Naive thymus-derived CD4-positive, alpha-beta T cell (primary cell): ENCODE measurements at regions of chr5 and their contacts with region 1.

Region 1: GRCh38 chr5:110738812-110739651 is at the start of gene SLC25A46:
- DNase-seq: peak; percentile 75 to 92 (median 91)
- ATAC-seq: peak; percentile 92
- H3K4me3 ChIP-seq: peak within 1 kb of the TSS; percentile 96
- H3K4me3 Mint-ChIP-seq: peak within 1 kb of the TSS; percentile 90 to 100 (median 96)
- H3K27ac ChIP-seq: peak within 1 kb of the TSS; percentile 86
- H3K27ac Mint-ChIP-seq: peak within 1 kb of the TSS; percentile 91 to 100 (median 96)
- H3K4me1 ChIP-seq: peaks cover 4 to 15% of the 10 kb centered on the region in 2 donors
- H3K4me1 Mint-ChIP-seq: peaks cover 14 to 45% (median 34%) of the 10 kb centered on the region in 7 donors
- H3K27me3 ChIP-seq: no peaks in the 10 kb centered on the region
- H3K27me3 Mint-ChIP-seq: peaks cover 4 to 19% (median 6%) of the 10 kb centered on the region in 5 donors
- total RNA-seq, gene SLC25A46: 23.8 to 50.5 (median 35.9) TPM

Region 2: DNA sequence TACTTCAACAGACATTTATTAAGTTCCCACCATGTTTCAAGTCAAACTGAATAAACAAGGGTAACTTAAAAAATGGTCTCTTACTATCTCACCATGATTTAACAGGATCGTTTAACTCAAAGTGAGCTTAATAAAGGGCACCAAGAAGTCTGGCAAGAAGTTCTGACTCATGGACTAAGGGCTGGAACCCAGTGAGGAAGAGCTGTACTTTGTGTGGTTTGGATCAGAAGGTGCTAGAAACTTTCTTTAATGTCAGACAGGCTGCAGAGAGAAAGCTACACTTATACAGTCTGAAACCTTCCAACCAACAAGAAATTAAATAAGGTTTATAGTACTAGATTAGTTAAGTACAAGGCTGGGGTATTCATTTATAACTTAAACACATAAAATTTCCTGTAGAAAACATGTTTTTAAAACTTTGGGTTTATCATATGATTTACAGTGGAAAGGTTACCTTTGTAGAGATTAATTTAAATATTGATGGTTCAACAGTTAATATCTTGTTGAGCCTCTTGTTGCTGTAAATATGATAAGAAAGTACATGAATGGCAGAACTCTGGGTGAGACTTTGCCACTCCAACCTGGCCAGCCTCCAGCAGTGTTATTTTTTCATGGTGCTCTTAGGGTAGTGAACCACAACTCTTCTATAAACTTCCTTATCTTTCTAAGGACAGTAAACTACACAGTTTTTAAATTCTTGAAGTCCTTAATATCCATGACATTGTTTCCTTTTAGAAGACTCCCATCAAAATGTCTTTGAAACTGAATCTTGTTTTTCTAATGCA is 886.5 kb before region 1 on chr5:
- CTCF ChIA-PET with region 1: no interaction called
- POLR2A ChIA-PET with region 1: no interaction called
- intact Hi-C with region 1: loop called in 1 of 2 experiments (anchors 10 kb)
- DNase-seq: no peak
- ATAC-seq: no peak
- H3K4me3 ChIP-seq: no peak overlapping the region
- H3K4me3 Mint-ChIP-seq: peak overlapping the region in 8 of 10 donors; percentile 9 to 75 (median 23)
- H3K27ac ChIP-seq: no peak overlapping the region
- H3K27ac Mint-ChIP-seq: peak overlapping the region in 8 of 9 donors; percentile 63 to 97 (median 84)
- H3K4me1 ChIP-seq: peaks cover 61 to 71% of the 10 kb centered on the region in 2 donors
- H3K4me1 Mint-ChIP-seq: peaks cover 47 to 99% (median 91%) of the 10 kb centered on the region in 7 donors
- H3K27me3 ChIP-seq: no peaks in the 10 kb centered on the region
- H3K27me3 Mint-ChIP-seq: no peaks in the 10 kb centered on the region

Region 3: DNA sequence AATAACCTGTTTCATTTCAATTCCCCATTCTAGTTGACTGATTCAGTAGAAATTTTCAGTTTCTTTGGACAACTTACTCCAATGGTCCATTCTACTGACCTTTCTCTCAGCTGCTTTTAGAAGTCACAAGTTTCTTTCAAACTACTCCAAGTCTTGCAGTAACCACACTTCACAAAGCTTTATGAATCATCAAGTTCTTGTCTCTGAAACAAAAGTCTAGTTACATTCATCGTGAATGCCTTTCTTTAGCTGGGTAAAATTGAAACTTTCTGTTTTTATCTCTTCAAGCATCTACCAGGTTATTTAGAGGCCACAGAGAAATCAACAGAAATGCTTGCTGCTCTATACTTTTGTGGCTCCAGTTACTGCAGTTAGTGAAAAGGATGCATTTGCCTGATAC is 417.9 kb before region 1 on chr5:
- CTCF ChIA-PET with region 1: no interaction called
- POLR2A ChIA-PET with region 1: no interaction called
- intact Hi-C with region 1: no loop called
- DNase-seq: no peak
- ATAC-seq: no peak
- H3K4me3 ChIP-seq: no peak overlapping the region
- H3K4me3 Mint-ChIP-seq: no peak overlapping the region
- H3K27ac ChIP-seq: no peak overlapping the region
- H3K27ac Mint-ChIP-seq: no peak overlapping the region
- H3K4me1 ChIP-seq: no peaks in the 10 kb centered on the region
- H3K4me1 Mint-ChIP-seq: peaks cover 0 to 4% (median 0%) of the 10 kb centered on the region in 7 donors
- H3K27me3 ChIP-seq: no peaks in the 10 kb centered on the region
- H3K27me3 Mint-ChIP-seq: no peaks in the 10 kb centered on the region

Region 4: DNA sequence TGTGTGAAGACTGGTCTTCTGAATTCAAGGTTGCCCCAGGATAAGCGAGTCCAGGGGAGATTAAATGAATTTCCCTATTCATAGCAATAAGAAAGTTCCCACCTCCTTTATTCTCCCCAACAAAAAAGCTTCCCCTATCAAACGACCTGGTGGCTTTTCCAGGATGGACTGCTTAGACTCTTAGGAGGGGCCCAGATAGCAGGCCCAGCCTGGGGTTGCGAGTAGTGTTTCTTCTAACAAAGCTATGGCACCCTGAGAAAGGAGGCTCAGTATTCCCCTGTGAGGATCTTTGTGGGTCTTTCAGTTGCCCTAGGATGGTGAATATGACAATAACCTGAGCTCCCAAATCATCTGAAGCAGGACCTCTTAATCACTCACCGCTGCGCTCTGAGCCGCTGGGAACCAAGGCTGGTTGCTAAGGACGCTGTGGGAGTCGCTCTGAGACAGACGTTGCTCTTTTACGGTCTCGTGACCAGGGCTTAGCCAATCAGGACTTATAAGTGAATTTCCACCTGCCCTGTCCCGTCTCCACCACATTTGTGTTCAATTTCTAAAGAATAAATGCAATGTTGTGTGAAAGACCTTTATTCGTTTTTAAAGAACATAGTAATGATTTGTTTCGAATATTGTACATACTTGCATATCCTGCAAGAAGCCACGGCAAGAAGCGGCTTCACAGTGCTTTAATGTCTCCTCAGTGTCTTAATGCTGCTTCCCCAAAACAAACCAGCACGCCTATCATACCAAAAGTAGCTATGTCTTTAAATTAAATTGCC is 12.6 kb before region 1 on chr5 and contains the start of gene TMEM232:
- CTCF ChIA-PET with region 1: interaction called, 3 read pairs
- POLR2A ChIA-PET with region 1: interaction called, 7 read pairs
- intact Hi-C with region 1: loop called (anchors 1 kb)
- DNase-seq: peak; percentile 40 to 85 (median 65)
- ATAC-seq: peak; percentile 99
- H3K4me3 ChIP-seq: peak within 1 kb of the TSS; percentile 59
- H3K4me3 Mint-ChIP-seq: peak within 1 kb of the TSS; percentile 73 to 97 (median 86)
- H3K27ac ChIP-seq: peak within 1 kb of the TSS; percentile 37
- H3K27ac Mint-ChIP-seq: peak within 1 kb of the TSS in 7 of 9 donors; percentile 15 to 79 (median 65)
- H3K4me1 ChIP-seq: no peaks in the 10 kb centered on the region
- H3K4me1 Mint-ChIP-seq: peaks cover 0 to 8% (median 0%) of the 10 kb centered on the region in 7 donors
- H3K27me3 ChIP-seq: no peaks in the 10 kb centered on the region
- H3K27me3 Mint-ChIP-seq: peaks cover 0 to 3% (median 0%) of the 10 kb centered on the region in 5 donors
- total RNA-seq, gene TMEM232: 1.6 to 3.0 (median 2.9) TPM

Region 5: DNA sequence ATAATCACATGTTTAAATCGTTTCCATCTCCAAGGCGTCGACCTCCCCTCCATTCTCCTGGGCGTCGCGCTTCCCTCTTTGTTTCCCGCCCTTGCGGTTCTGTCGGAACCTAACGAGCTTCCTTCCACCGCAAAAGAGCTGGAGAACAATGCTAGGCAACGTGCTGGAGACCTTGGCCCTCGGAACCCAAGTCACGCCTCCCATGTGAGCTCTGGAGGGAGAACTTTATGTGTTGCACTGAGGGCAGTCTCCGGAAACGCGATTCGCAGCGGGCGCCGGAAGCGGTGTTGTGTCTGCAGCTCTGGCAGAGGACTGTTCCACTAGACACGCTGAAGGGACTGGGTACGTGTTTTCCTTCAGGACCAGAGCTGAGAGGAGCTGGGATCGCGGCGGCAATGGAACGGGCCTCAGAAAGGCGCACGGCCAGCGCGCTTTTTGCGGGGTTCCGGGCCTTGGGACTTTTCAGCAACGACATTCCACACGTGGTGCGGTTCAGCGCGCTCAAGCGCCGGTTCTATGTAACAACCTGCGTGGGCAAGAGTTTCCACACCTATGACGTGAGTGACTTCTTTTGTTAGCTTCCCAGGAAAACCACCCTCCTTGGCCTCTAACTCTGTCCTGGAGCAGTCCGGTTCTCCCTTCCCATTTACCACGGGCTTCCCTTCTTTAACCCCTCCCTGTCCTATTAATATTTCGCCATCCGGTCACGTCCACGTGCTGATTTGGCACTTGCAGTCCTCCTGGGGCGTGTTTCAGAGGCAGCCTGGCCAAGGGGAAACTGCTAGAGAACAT is 353.2 kb after region 1 on chr5 and contains the start of gene WDR36:
- CTCF ChIA-PET with region 1: no interaction called
- POLR2A ChIA-PET with region 1: interaction called, 4 read pairs
- intact Hi-C with region 1: loop called (anchors 1 kb)
- DNase-seq: peak; percentile 80 to 95 (median 87)
- ATAC-seq: peak; percentile 99
- H3K4me3 ChIP-seq: peak within 1 kb of the TSS; percentile 88
- H3K4me3 Mint-ChIP-seq: peak within 1 kb of the TSS; percentile 91 to 99 (median 98)
- H3K27ac ChIP-seq: peak within 1 kb of the TSS; percentile 82
- H3K27ac Mint-ChIP-seq: peak within 1 kb of the TSS; percentile 66 to 98 (median 94)
- H3K4me1 ChIP-seq: peaks cover 11 to 20% of the 10 kb centered on the region in 2 donors
- H3K4me1 Mint-ChIP-seq: peaks cover 22 to 49% (median 39%) of the 10 kb centered on the region in 7 donors
- H3K27me3 ChIP-seq: no peaks in the 10 kb centered on the region
- H3K27me3 Mint-ChIP-seq: peaks cover 0 to 12% (median 5%) of the 10 kb centered on the region in 5 donors
- total RNA-seq, gene WDR36: 24.8 to 37.4 (median 29.7) TPM

Region 6: GRCh38 chr5:111512375-111513130 is 773.5 kb after region 1 on chr5 and contains the start of gene STARD4:
- CTCF ChIA-PET with region 1: no interaction called
- POLR2A ChIA-PET with region 1: no interaction called
- intact Hi-C with region 1: loop called (anchors 5 kb)
- DNase-seq: peak; percentile 79 to 94 (median 92)
- ATAC-seq: peak; percentile 97
- H3K4me3 ChIP-seq: peak within 1 kb of the TSS; percentile 81
- H3K4me3 Mint-ChIP-seq: peak within 1 kb of the TSS; percentile 91 to 100 (median 98)
- H3K27ac ChIP-seq: peak within 1 kb of the TSS; percentile 73
- H3K27ac Mint-ChIP-seq: peak within 1 kb of the TSS; percentile 90 to 98 (median 94)
- H3K4me1 ChIP-seq: peaks cover 0 to 14% of the 10 kb centered on the region in 2 donors
- H3K4me1 Mint-ChIP-seq: peaks cover 17 to 53% (median 28%) of the 10 kb centered on the region in 7 donors
- H3K27me3 ChIP-seq: no peaks in the 10 kb centered on the region
- H3K27me3 Mint-ChIP-seq: no peaks in the 10 kb centered on the region
- total RNA-seq, gene STARD4: 11.1 to 70.8 (median 17.1) TPM

Region 7: GRCh38 chr5:111834926-111835598 is 1096.0 kb after region 1 on chr5:
- CTCF ChIA-PET with region 1: no interaction called
- POLR2A ChIA-PET with region 1: no interaction called
- intact Hi-C with region 1: no loop called
- DNase-seq: no peak
- ATAC-seq: no peak
- H3K4me3 ChIP-seq: no peak overlapping the region
- H3K4me3 Mint-ChIP-seq: no peak overlapping the region
- H3K27ac ChIP-seq: no peak overlapping the region
- H3K27ac Mint-ChIP-seq: no peak overlapping the region
- H3K4me1 ChIP-seq: no peaks in the 10 kb centered on the region
- H3K4me1 Mint-ChIP-seq: no peaks in the 10 kb centered on the region
- H3K27me3 ChIP-seq: no peaks in the 10 kb centered on the region
- H3K27me3 Mint-ChIP-seq: peaks cover 0 to 21% (median 7%) of the 10 kb centered on the region in 5 donors

Region 8: DNA sequence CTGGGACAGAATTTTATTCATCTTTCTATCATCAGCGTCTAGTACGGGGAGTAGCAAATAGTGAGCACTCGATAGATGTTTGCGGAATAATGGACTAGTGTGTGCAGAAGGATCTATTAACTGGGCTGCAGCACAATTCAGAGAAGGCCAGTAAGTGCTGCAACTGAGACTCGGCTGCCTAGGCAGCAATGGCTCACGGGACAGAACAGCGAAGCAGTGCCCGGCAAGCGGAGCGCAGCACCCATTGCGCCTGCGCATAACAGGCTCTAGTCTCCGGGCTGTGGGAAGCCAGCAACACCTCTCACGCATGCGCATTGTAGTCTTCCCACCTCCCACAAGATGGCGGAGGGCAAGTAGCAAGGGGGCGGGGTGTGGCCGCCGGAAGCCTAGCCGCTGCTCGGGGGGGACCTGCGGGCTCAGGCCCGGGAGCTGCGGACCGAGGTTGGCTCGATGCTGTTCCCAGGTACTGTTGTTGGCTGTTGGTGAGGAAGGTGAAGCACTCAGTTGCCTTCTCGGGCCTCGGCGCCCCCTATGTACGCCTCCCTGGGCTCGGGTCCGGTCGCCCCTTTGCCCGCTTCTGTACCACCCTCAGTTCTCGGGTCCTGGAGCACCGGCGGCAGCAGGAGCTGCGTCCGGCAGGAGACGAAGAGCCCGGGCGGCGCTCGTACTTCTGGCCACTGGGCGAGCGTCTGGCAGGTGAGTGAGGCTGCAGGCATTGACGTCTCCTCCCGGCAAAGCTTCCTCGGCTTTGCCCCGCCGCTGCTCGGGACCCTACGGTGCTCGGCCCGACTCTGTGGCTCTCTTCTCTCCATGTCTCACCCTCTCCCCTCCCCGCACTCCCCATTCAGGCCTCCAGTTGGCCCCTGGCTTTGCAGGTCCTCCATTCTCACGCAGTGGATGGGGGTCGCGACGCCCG is 1968.4 kb after region 1 on chr5:
- CTCF ChIA-PET with region 1: no interaction called
- POLR2A ChIA-PET with region 1: no interaction called
- intact Hi-C with region 1: loop called (anchors 1 to 5 kb)
- DNase-seq: peak; percentile 83 to 98 (median 97)
- ATAC-seq: peak; percentile 96
- H3K4me3 ChIP-seq: peak overlapping the region; percentile 92
- H3K4me3 Mint-ChIP-seq: peak overlapping the region; percentile 79 to 98 (median 94)
- H3K27ac ChIP-seq: peak overlapping the region; percentile 82
- H3K27ac Mint-ChIP-seq: peak overlapping the region; percentile 88 to 96 (median 92)
- H3K4me1 ChIP-seq: peaks cover 29 to 47% of the 10 kb centered on the region in 2 donors
- H3K4me1 Mint-ChIP-seq: peaks cover 50 to 62% (median 57%) of the 10 kb centered on the region in 7 donors
- H3K27me3 ChIP-seq: no peaks in the 10 kb centered on the region
- H3K27me3 Mint-ChIP-seq: peaks cover 0 to 8% (median 0%) of the 10 kb centered on the region in 5 donors